Upper lobe of right lung (tissue), 1 donor: ENCODE measurements at regions of chr5 and their contacts with region 1.

Region 1: GRCh38 chr5:139787568-139788293 is 7.9 kb upstream of the PSD2 start:
- DNase-seq: peak; percentile 91
- ATAC-seq: peak; percentile 94
- H3K4me3 ChIP-seq: peak overlapping the region; percentile 74
- H3K27ac ChIP-seq: peak overlapping the region; percentile 51
- H3K4me1 ChIP-seq: peaks cover 4% of the 10 kb centered on the region
- H3K27me3 ChIP-seq: peaks cover 15% of the 10 kb centered on the region
- CTCF ChIP-seq: peak; percentile 91

Region 2: DNA sequence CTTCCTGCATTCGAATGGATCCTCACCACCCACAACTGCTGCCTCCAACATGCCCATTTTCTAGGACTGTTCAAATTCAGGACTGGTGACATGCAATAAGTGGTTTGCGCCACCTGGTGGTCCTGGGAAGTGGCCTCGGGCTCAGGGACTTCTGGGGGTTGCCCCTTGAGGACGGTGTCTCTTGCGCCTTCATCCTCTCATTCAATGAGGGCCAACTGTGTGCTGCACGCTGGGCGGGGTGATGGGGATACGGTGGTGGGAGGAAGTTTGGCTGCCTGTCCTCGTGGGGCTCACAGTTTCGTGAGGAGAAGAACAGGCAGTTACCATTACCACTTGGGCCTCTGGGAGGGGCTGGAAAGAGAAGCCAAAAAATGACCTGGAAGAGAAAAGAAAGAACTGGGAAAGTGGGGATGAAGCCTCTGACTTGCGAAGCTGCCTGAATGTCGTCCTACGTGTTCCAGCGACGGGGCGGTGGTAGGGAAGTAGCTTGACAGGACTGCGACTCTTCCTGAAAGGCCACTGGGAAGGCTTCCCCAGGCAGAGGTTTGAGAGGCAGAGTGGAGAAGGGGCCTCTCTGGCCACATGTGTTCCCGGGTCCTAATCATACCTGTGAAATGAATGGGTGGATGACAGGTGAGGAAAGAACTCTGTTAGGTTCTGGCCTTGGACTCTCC is 56.9 kb after region 1 on chr5:
- intact Hi-C with region 1: no loop called
- DNase-seq: peak; percentile 86
- ATAC-seq: peak; percentile 66
- H3K4me3 ChIP-seq: no peak overlapping the region
- H3K27ac ChIP-seq: no peak overlapping the region
- H3K4me1 ChIP-seq: peaks cover 13% of the 10 kb centered on the region
- H3K27me3 ChIP-seq: peaks cover 9% of the 10 kb centered on the region
- CTCF ChIP-seq: peak; percentile 78

Region 3: GRCh38 chr5:139869042-139869790 is 81.5 kb after region 1 on chr5:
- intact Hi-C with region 1: loop called (anchors 5 kb)
- DNase-seq: no peak
- ATAC-seq: no peak
- H3K4me3 ChIP-seq: no peak overlapping the region
- H3K27ac ChIP-seq: no peak overlapping the region
- H3K4me1 ChIP-seq: no peaks in the 10 kb centered on the region
- H3K27me3 ChIP-seq: no peaks in the 10 kb centered on the region
- CTCF ChIP-seq: no peak

Region 4: GRCh38 chr5:139955053-139955605 is 167.4 kb after region 1 on chr5:
- intact Hi-C with region 1: no loop called
- DNase-seq: peak; percentile 27
- ATAC-seq: no peak
- H3K4me3 ChIP-seq: no peak overlapping the region
- H3K27ac ChIP-seq: no peak overlapping the region
- H3K4me1 ChIP-seq: no peaks in the 10 kb centered on the region
- H3K27me3 ChIP-seq: no peaks in the 10 kb centered on the region
- CTCF ChIP-seq: no peak

Region 5: GRCh38 chr5:139968547-139969261 is 181.0 kb after region 1 on chr5:
- intact Hi-C with region 1: loop called (anchors 2 kb)
- DNase-seq: peak; percentile 92
- ATAC-seq: peak; percentile 99
- H3K4me3 ChIP-seq: no peak overlapping the region
- H3K27ac ChIP-seq: peak overlapping the region; percentile 7
- H3K4me1 ChIP-seq: peaks cover 6% of the 10 kb centered on the region
- H3K27me3 ChIP-seq: no peaks in the 10 kb centered on the region
- CTCF ChIP-seq: peak; percentile 98